Dorsolateral prefrontal cortex (tissue), 120 donors: ENCODE measurements at regions of chr1 and their contacts with region 1.

Region 1: DNA sequence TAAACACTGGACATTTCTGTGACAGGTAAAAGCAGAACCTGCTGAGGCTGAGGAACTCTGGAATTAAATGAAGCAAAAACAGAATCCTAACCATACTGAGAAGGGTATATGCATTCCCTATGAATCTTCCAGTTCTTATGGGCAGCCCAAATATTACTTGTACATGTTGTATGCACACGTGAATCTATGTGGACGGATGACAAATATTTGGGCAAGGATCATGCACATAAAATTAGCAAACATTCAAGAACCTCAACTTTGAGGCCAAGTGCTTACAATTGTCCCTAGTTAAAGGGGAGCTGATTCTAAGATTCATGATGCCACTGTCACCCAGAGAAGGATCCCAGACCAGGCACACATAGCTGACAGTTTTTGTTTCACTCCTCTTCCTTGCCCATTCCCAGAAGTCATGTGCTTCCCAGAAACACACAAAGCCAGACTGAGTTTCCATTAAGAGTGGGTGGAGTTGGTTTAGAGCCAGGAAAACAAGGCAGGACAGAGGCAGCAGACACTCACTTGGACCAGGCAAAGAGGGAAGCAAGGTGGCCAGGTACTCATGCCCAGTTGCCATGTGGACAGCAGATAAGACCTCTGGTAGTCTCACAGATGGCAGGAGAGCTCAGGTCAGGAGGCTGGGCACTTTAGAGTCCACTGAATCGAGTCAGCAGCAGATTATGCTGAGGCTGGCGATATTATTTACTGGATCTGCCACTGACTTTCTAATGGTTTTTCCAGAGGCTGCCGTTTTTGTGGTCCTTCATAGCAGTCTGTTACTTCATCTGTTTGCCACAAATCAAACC is 25.6 kb downstream of the AK2 start:
- DNase-seq: peak in 2 of 10 donors; percentile 27 to 44
- H3K4me3 ChIP-seq: no peak overlapping the region
- H3K27ac ChIP-seq: peak overlapping the region in 54 of 59 donors; percentile 1 to 84 (median 64)
- H3K27me3 ChIP-seq: no peaks in the 10 kb centered on the region
- CTCF ChIP-seq: no peak

Region 2: GRCh38 chr1:32636914-32637645 is 374.1 kb before region 1 on chr1:
- intact Hi-C with region 1: no loop called
- DNase-seq: no peak
- H3K4me3 ChIP-seq: no peak overlapping the region
- H3K27ac ChIP-seq: no peak overlapping the region
- H3K27me3 ChIP-seq: no peaks in the 10 kb centered on the region
- CTCF ChIP-seq: no peak

Region 3: GRCh38 chr1:32933742-32934322 is 77.3 kb before region 1 on chr1:
- intact Hi-C with region 1: loop called (anchors 5 to 10 kb)
- DNase-seq: no peak
- H3K4me3 ChIP-seq: no peak overlapping the region
- H3K27ac ChIP-seq: peak overlapping the region in 43 of 59 donors; percentile 4 to 76 (median 44)
- H3K27me3 ChIP-seq: no peaks in the 10 kb centered on the region
- CTCF ChIP-seq: peak in 19 of 56 donors; percentile 3 to 57 (median 19)

Region 4: DNA sequence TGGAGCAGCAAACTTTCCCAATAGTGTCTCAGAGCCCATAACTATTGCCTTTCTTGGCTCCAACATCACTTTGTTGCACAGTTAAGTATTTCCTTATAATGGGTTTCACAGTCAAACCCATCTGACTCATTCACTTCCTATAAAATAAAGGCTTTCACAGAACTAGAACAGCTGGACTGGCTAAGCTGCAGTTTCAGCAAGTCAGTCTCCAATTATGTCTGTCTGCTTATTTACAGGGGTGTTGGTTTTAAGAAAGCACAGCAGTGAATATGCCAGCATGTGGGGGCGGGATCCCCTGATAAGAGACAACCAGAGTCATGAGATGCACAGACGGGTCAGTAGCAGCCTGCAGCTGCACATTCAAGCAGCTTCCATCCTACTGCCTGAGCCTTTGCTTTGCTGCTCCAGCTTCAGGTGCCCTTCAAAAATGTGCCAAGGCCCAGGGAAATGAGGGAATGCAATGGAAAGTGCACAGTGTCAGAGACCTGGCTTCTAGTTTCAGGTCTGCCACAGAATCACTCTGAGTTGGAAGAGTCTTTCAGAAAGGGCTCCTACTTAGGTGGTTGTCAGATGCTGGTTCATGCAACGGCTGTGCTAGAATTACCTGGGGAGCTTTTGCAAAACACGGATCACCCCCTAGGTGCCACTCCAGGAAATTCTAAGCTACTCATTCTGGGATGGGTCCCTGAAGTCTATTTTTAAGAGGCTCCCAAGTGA is 71.3 kb before region 1 on chr1:
- intact Hi-C with region 1: loop called in 1 of 2 experiments (anchors 10 kb)
- DNase-seq: peak in 3 of 10 donors; percentile 27 to 42 (median 39)
- H3K4me3 ChIP-seq: no peak overlapping the region
- H3K27ac ChIP-seq: peak overlapping the region in 47 of 59 donors; percentile 1 to 76 (median 38)
- H3K27me3 ChIP-seq: no peaks in the 10 kb centered on the region
- CTCF ChIP-seq: no peak

Region 5: GRCh38 chr1:32981003-32981901 is 29.9 kb before region 1 on chr1:
- intact Hi-C with region 1: no loop called
- DNase-seq: no peak
- H3K4me3 ChIP-seq: no peak overlapping the region
- H3K27ac ChIP-seq: peak overlapping the region in 45 of 59 donors; percentile 13 to 78 (median 54)
- H3K27me3 ChIP-seq: no peaks in the 10 kb centered on the region
- CTCF ChIP-seq: no peak

Region 6: GRCh38 chr1:33086384-33086850 is 75.3 kb after region 1 on chr1:
- intact Hi-C with region 1: loop called in 1 of 2 experiments (anchors 2 kb)
- DNase-seq: peak; percentile 82 to 92 (median 86)
- H3K4me3 ChIP-seq: peak overlapping the region in 13 of 59 donors; percentile 3 to 33 (median 18)
- H3K27ac ChIP-seq: peak overlapping the region in 49 of 59 donors; percentile 7 to 92 (median 52)
- H3K27me3 ChIP-seq: no peaks in the 10 kb centered on the region
- CTCF ChIP-seq: peak; percentile 39 to 95 (median 86)